A549 (cell line): ENCODE measurements at regions of chr17 and their contacts with region 1.

Region 1: DNA sequence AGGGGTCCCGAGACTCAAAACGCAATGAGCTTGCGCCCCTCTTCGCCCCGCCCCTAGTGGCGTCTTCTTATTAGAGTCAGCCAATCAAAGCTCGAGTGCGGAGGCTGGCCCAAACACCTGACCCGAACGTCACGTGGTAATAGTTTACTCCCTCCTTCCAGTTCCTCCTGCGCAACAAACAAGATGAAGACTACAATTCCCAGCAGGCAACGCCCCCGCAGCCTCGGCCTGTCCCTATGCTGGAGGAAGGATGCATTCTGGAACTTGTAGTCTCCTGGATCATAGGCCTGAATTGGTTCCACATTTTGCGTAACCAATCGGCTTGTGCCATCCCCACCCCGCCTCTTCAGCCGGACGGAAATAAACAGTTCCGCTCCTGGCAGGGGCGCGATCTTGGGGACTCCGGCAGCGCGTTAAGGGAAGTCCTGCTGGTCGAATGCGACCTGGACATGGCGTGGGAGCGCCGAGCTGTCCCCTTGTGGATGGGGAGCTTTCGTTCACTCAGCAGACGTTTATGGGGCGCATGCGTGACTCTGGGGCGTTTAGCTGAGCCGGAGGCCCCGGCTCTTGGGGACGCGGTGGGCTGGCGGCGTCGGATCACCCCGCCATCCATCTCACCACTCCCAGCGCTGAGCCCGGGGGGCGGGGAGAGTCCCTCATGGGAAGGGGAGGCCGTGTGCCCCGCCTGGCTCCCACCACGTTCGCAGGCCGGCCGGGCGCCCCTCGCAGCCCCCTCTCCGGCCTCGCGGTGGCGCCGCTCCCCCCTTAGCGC is at the start of gene WBP2:
- DNase-seq: peak; percentile 100
- ATAC-seq: peak; percentile 90 to 95
- H3K4me3 ChIP-seq: peak within 1 kb of the TSS; percentile 58
- H3K27ac ChIP-seq: peak within 1 kb of the TSS; percentile 83 to 91
- H3K4me1 ChIP-seq: peaks cover 19% of the 10 kb centered on the region
- CTCF ChIP-seq: peak; percentile 63
- EP300 ChIP-seq: no peak
- POLR2A ChIP-seq: peak; percentile 95
- RAD21 ChIP-seq: peak in 1 of 2 experiments; percentile 65; a peak in 4 of 5 replicates
- polyA plus RNA-seq, gene WBP2: 35.6 and 39.7 TPM in 2 replicates

Region 2: GRCh38 chr17:75872434-75873351 is 17.2 kb after region 1 on chr17:
- CTCF ChIA-PET with region 1: interaction called, 330 read pairs
- POLR2A ChIA-PET with region 1: interaction called, 27 read pairs
- DNase-seq: peak; percentile 82 to 87
- ATAC-seq: peak; percentile 7 to 52; a peak in 4 of 6 replicates
- H3K4me3 ChIP-seq: no peak overlapping the region
- H3K27ac ChIP-seq: peak overlapping the region; percentile 68 to 85
- H3K4me1 ChIP-seq: peaks cover 56% of the 10 kb centered on the region
- CTCF ChIP-seq: no peak
- EP300 ChIP-seq: no peak
- POLR2A ChIP-seq: no peak
- RAD21 ChIP-seq: no peak

Region 3: GRCh38 chr17:75896415-75897159 is 41.1 kb after region 1 on chr17 and contains the start of gene TRIM65:
- CTCF ChIA-PET with region 1: interaction called, 29 read pairs
- POLR2A ChIA-PET with region 1: interaction called, 14 read pairs
- DNase-seq: peak; percentile 69 to 83
- ATAC-seq: peak; percentile 76 to 80
- H3K4me3 ChIP-seq: peak within 1 kb of the TSS; percentile 84
- H3K27ac ChIP-seq: peak within 1 kb of the TSS; percentile 90 to 97
- H3K4me1 ChIP-seq: peaks cover 17% of the 10 kb centered on the region
- CTCF ChIP-seq: peak; percentile 59
- EP300 ChIP-seq: no peak
- POLR2A ChIP-seq: peak; percentile 95
- RAD21 ChIP-seq: peak; percentile 12 to 54; a peak in 3 of 5 replicates
- polyA plus RNA-seq, gene TRIM65: 13.5 and 17.4 TPM in 2 replicates

Region 4: DNA sequence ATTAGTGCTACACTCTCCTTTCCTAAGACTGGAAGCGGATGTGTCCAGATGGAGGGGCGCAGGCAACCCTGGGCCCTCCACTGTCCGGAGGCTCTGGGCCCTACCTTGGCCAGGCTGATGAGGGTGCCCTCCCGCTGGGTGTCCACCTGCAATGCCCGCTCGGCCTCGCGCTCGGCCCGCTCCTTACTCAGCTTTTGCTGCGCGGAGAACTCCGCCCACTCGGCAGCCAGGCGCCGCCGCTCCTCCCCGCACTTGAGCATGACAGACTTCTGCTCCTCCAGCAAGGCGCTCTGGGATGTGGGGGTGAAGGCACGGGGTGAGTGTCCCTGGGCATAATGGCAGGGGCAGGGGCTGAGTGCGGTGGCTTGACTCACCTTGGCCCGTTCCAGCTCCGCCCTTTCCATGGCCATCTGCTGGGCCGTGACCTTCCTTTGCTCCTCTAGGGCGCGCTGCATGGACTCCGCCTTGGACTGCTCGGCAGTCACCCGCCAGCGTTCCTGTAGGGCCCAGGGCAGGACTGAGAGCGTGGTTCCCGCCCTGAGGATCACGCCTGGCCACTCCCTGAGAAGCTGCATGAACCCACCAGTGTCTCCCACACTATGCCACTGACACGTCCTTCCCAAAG is 59.3 kb after region 1 on chr17:
- CTCF ChIA-PET with region 1: no interaction called
- POLR2A ChIA-PET with region 1: interaction called, 12 read pairs
- DNase-seq: no peak
- ATAC-seq: peak; percentile 35 to 41; a peak in 5 of 6 replicates
- H3K4me3 ChIP-seq: no peak overlapping the region
- H3K27ac ChIP-seq: no peak overlapping the region
- H3K4me1 ChIP-seq: no peaks in the 10 kb centered on the region
- CTCF ChIP-seq: no peak
- EP300 ChIP-seq: no peak
- POLR2A ChIP-seq: no peak
- RAD21 ChIP-seq: no peak